A549 (cell line): ENCODE measurements at regions of chr20 and their contacts with region 1.

Region 1: GRCh38 chr20:52179331-52180179 is 12.0 kb downstream of the ZFP64 start:
- DNase-seq: no peak
- ATAC-seq: no peak
- H3K4me3 ChIP-seq: no peak overlapping the region
- H3K27ac ChIP-seq: no peak overlapping the region
- H3K4me1 ChIP-seq: no peaks in the 10 kb centered on the region
- CTCF ChIP-seq: no peak
- EP300 ChIP-seq: no peak
- POLR2A ChIP-seq: no peak
- RAD21 ChIP-seq: no peak

Region 2: GRCh38 chr20:52191132-52191915 is 11.8 kb after region 1 on chr20 and contains the start of gene ZFP64:
- CTCF ChIA-PET with region 1: interaction called, 17 read pairs
- POLR2A ChIA-PET with region 1: interaction called, 3 read pairs
- DNase-seq: peak; percentile 81 to 88
- ATAC-seq: peak; percentile 90 to 92
- H3K4me3 ChIP-seq: peak within 1 kb of the TSS; percentile 77
- H3K27ac ChIP-seq: peak within 1 kb of the TSS; percentile 95 to 100
- H3K4me1 ChIP-seq: peaks cover 16% of the 10 kb centered on the region; the same call in 2 of the 3 replicates
- CTCF ChIP-seq: peak; percentile 69
- EP300 ChIP-seq: no peak
- POLR2A ChIP-seq: peak; percentile 61
- RAD21 ChIP-seq: no peak
- polyA plus RNA-seq, gene ZFP64: 22.0 and 24.7 TPM in 2 replicates